Activated B cell treated with CpG ODN at 0.5 μM for 24 hours (primary cell): ENCODE measurements at regions of chr6 and their contacts with region 1.

Region 1: GRCh38 chr6:16591396-16592222 is 169.7 kb downstream of the ATXN1 start:
- DNase-seq: no peak
- ATAC-seq: peak; percentile 75
- H3K4me3 Mint-ChIP-seq: peak overlapping the region; percentile 72
- H3K27ac Mint-ChIP-seq: peak overlapping the region; percentile 83
- H3K4me1 Mint-ChIP-seq: peaks cover 52% of the 10 kb centered on the region
- H3K27me3 Mint-ChIP-seq: no peaks in the 10 kb centered on the region
- CTCF ChIP-seq: no peak

Region 2: DNA sequence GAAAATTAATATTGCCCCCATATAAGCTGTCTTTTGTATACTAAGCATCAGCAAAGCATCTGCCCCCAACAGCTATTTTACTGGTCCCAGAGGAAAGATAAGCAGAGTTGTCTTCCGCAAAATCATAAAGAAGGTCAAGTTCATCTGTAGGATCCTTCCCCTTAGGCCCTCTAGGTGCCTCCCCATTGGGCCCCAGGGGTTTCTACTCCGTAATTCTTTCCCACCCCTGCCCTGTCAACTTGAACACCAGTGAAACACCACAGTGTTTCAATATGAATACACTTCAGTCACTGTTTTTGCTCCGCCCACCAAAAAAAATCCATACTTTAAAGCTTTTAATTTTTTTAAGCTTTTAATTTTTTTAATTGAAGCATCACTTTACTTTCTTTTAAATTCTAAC is 10.4 kb after region 1 on chr6:
- CTCF ChIA-PET with region 1: no interaction called
- POLR2A ChIA-PET with region 1: interaction called, 19 read pairs
- intact Hi-C with region 1: loop called (anchors 1 kb)
- DNase-seq: no peak
- ATAC-seq: peak; percentile 99
- H3K4me3 Mint-ChIP-seq: peak overlapping the region; percentile 12
- H3K27ac Mint-ChIP-seq: no peak overlapping the region
- H3K4me1 Mint-ChIP-seq: peaks cover 29% of the 10 kb centered on the region
- H3K27me3 Mint-ChIP-seq: no peaks in the 10 kb centered on the region
- CTCF ChIP-seq: no peak

Region 3: DNA sequence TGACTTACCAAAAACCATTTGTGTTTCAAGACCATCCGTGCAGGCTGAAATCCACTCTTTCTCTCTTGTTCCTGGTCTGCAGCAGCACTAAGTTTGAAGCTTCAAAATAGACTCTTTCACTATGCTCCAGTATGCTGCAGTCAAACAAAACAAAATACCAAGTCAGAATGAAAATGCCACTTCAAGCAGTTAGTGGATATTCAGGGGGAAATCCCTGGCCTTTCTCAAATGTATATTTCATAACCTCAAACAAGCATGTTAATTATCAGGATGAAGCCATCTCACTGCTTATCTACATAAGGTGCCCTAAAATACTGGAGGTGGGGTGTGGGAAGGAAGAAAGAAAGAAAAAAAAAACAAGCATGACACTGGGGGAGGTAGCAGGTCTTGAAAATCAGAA is 66.2 kb after region 1 on chr6:
- CTCF ChIA-PET with region 1: no interaction called
- POLR2A ChIA-PET with region 1: no interaction called
- intact Hi-C with region 1: loop called (anchors 5 kb)
- DNase-seq: no peak
- ATAC-seq: peak; percentile 57
- H3K4me3 Mint-ChIP-seq: peak overlapping the region; percentile 45
- H3K27ac Mint-ChIP-seq: no peak overlapping the region
- H3K4me1 Mint-ChIP-seq: peaks cover 36% of the 10 kb centered on the region
- H3K27me3 Mint-ChIP-seq: no peaks in the 10 kb centered on the region
- CTCF ChIP-seq: no peak

Region 4: GRCh38 chr6:16684896-16685554 is 93.4 kb after region 1 on chr6:
- CTCF ChIA-PET with region 1: no interaction called
- POLR2A ChIA-PET with region 1: interaction called, 3 read pairs
- intact Hi-C with region 1: loop called (anchors 1 kb)
- DNase-seq: peak; percentile 45
- ATAC-seq: peak; percentile 71
- H3K4me3 Mint-ChIP-seq: peak overlapping the region; percentile 46
- H3K27ac Mint-ChIP-seq: peak overlapping the region; percentile 90
- H3K4me1 Mint-ChIP-seq: peaks cover 61% of the 10 kb centered on the region
- H3K27me3 Mint-ChIP-seq: no peaks in the 10 kb centered on the region
- CTCF ChIP-seq: no peak

Region 5: DNA sequence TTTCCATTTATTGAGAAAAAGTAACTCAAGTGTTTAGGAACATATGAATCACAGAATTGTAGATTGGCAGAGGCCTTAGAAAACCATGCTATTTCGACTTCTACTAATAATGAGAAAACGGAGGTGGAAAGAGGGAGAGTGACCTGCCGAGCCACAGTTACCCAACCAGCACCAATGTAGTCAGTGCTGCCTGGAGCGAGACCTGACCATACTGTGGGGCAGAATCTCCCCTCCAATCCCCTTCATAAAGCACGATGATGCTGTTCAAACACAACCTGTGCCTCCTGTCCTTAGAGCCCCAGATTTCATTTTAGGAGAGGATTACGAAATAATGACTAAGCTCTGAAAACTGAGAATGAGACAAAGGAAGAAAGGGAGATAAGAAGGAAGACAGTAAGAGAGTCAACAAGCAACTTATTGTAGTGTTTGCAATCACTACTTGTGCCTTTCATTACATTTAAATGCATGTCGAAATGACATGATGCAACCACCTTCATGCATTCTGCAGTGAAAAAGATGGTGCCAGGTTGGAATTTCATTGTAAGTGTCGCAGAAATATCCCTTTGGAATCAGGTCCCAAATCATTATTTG is 99.1 kb after region 1 on chr6:
- CTCF ChIA-PET with region 1: no interaction called
- POLR2A ChIA-PET with region 1: interaction called, 12 read pairs
- intact Hi-C with region 1: loop called (anchors 1 kb)
- DNase-seq: no peak
- ATAC-seq: peak; percentile 79
- H3K4me3 Mint-ChIP-seq: peak overlapping the region; percentile 15
- H3K27ac Mint-ChIP-seq: peak overlapping the region; percentile 78
- H3K4me1 Mint-ChIP-seq: peaks cover 60% of the 10 kb centered on the region
- H3K27me3 Mint-ChIP-seq: no peaks in the 10 kb centered on the region
- CTCF ChIP-seq: no peak

Region 6: DNA sequence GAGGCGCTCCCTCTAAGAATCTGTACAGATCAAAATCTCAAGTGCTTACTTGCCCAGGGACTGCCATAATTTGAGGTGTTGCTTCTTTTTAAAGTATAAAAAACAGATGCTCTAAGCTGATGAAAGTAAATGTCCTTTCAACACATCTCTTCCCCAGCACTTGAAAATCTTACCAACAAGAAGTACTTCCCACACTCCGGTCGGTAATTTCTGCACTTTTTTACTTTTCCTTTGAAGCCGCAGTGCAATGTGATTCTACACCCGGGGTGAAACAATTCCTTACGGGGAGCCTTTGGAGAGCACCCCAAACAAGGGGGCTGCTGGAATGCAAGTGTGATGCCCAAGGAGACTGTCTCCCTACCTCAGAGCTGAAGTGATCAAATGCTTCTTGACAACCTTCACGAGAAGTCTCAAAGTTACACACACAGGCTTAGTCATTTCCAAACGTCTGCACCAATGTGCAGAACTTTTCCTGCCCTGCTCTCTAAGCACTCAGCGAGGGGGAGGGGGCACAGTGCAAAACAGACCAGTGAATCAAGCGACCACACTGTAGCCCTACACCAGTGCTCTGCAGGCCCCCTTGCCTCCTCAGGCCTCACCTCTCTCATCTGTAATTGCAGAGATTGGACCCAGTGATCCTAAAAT is 112.9 kb after region 1 on chr6:
- CTCF ChIA-PET with region 1: no interaction called
- POLR2A ChIA-PET with region 1: no interaction called
- intact Hi-C with region 1: no loop called
- DNase-seq: no peak
- ATAC-seq: peak; percentile 45
- H3K4me3 Mint-ChIP-seq: peak overlapping the region; percentile 15
- H3K27ac Mint-ChIP-seq: no peak overlapping the region
- H3K4me1 Mint-ChIP-seq: peaks cover 57% of the 10 kb centered on the region
- H3K27me3 Mint-ChIP-seq: peaks cover 8% of the 10 kb centered on the region
- CTCF ChIP-seq: no peak